ENCODE measurements at regions of chr4 and their contacts with region 1.

Region 1: GRCh38 chr4:8917868-8918783 is 46.5 kb upstream of the HMX1 start:
- DNase-seq: peak; percentile 89
- H3K4me3 ChIP-seq: no peak overlapping the region
- H3K27ac ChIP-seq: no peak overlapping the region
- H3K4me1 ChIP-seq: peaks cover 0 to 5% (median 0%) of the 10 kb centered on the region in 4 donors
- H3K27me3 ChIP-seq: peaks cover 0 to 76% (median 5%) of the 10 kb centered on the region in 4 donors
- CTCF ChIP-seq: peak; percentile 66 to 84 (median 69)
- EP300 ChIP-seq: no peak
- POLR2A ChIP-seq: no peak

Region 2: GRCh38 chr4:8607603-8608481 is 310.3 kb before region 1 on chr4:
- intact Hi-C with region 1: loop called (anchors 10 kb)
- DNase-seq: no peak
- H3K4me3 ChIP-seq: no peak overlapping the region
- H3K27ac ChIP-seq: no peak overlapping the region
- H3K4me1 ChIP-seq: peaks cover 5 to 12% (median 7%) of the 10 kb centered on the region in 4 donors
- H3K27me3 ChIP-seq: peaks cover 0 to 38% (median 2%) of the 10 kb centered on the region in 4 donors
- CTCF ChIP-seq: peak; percentile 72 to 98 (median 88)
- EP300 ChIP-seq: no peak
- POLR2A ChIP-seq: no peak

Region 3: GRCh38 chr4:8891646-8892555 is 26.2 kb before region 1 on chr4:
- intact Hi-C with region 1: no loop called
- DNase-seq: no peak
- H3K4me3 ChIP-seq: no peak overlapping the region
- H3K27ac ChIP-seq: no peak overlapping the region
- H3K4me1 ChIP-seq: peaks cover 0 to 32% (median 27%) of the 10 kb centered on the region in 4 donors
- H3K27me3 ChIP-seq: peaks cover 0 to 100% (median 34%) of the 10 kb centered on the region in 4 donors
- CTCF ChIP-seq: no peak
- EP300 ChIP-seq: no peak
- POLR2A ChIP-seq: no peak

Region 4: GRCh38 chr4:9735515-9735914 is 817.4 kb after region 1 on chr4:
- intact Hi-C with region 1: no loop called
- DNase-seq: no peak
- H3K4me3 ChIP-seq: no peak overlapping the region
- H3K27ac ChIP-seq: no peak overlapping the region
- H3K4me1 ChIP-seq: no peaks in the 10 kb centered on the region
- H3K27me3 ChIP-seq: no peaks in the 10 kb centered on the region
- CTCF ChIP-seq: no peak
- EP300 ChIP-seq: no peak
- POLR2A ChIP-seq: no peak

Measured in esophagus muscularis mucosa (tissue), 4 donors.